ENCODE measurements at regions of chr4 and their contacts with region 1.

Region 1: GRCh38 chr4:109977854-109978501 is 65.3 kb downstream of the EGF start:
- DNase-seq: no peak
- ATAC-seq: peak in 1 of 2 donors; percentile 19

Region 2: DNA sequence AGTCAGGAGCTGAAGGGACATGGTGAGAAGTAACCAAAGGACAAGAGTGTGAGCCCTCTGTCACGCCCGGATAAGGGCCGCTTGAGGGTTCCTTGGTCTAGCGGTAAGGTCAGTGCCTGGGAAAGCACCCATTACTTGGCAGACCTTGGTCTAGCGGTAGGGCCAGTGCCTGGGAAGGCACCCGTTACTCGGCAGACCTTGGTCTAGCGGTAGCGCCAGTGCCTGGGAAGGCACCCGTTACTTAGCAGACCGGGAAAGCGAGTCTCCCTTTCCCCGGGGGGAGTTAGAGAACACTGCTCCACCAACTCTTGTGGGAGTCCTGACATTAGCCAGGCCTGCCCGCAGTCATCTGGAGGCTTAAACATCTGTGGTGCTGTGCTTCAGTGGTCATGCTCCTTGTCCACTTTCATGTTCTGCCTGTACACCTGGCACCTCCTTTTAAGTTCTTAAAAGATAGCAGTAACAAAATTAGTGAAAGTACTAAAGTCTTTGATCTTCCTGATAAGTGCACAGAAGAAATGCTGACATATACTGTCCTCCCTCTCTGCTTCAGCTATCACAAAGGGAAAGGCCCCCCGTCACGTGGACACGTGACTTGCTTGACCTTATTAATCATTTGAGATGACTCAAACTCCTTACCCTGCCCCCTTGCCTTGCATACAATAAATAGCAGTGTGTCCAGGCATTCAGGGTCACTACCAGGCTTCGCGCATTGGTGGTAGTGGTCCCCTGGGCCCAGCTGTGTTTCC is 553.7 kb before region 1 on chr4:
- intact Hi-C with region 1: loop called (anchors 5 kb)
- DNase-seq: no peak
- ATAC-seq: no peak

Region 3: GRCh38 chr4:109702950-109703663 is 274.9 kb before region 1 on chr4 and contains the start of gene CASP6:
- intact Hi-C with region 1: loop called in 1 of 2 experiments (anchors 5 kb)
- DNase-seq: peak; percentile 89
- ATAC-seq: peak; percentile 96 to 98
- total RNA-seq, gene CASP6: 7.6 to 15.8 TPM

Region 4: GRCh38 chr4:109826719-109827118 is 151.3 kb before region 1 on chr4:
- intact Hi-C with region 1: loop called in 1 of 2 experiments (anchors 10 kb)
- DNase-seq: no peak
- ATAC-seq: peak in 1 of 2 donors; percentile 42

Region 5: GRCh38 chr4:110042545-110043517 is 64.9 kb after region 1 on chr4:
- intact Hi-C with region 1: no loop called
- DNase-seq: no peak
- ATAC-seq: no peak